Stomach (tissue), 19 donors: ENCODE measurements at regions of chr19 and their contacts with region 1.

Region 1: DNA sequence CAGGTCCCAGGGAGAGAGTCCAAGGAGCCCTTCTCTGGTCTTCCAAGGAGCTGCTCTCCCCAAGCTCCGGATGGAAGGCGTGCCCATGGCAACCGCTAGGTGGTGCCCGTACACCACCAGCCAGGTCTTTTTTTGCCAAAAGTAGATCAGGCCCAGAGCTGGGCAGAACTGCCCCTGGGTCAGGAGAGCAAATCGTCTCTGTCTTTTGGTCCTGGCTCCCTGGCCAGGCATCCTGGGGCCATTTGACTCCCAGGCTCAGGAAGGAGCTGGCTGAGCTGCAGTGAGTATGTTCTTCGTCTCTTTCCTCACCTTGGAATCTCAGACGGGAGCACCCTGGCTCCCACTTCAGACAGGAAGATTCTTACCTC is 24.6 kb upstream of the BCL3 start:
- DNase-seq: peak; percentile 86 to 93
- H3K4me3 ChIP-seq: no peak overlapping the region
- H3K27ac ChIP-seq: peak overlapping the region; percentile 60 to 84 (median 73)
- H3K4me1 ChIP-seq: peaks cover 31 to 59% (median 37%) of the 10 kb centered on the region in 4 donors
- H3K27me3 ChIP-seq: no peaks in the 10 kb centered on the region
- CTCF ChIP-seq: peak in 5 of 7 experiments; percentile 89 to 98 (median 97)
- EP300 ChIP-seq: no peak
- POLR2A ChIP-seq: no peak

Region 2: GRCh38 chr19:44770550-44771257 is 46.8 kb after region 1 on chr19:
- intact Hi-C with region 1: loop called (anchors 5 kb)
- DNase-seq: peak; percentile 97 to 98
- H3K4me3 ChIP-seq: peak overlapping the region in 1 of 4 donors; percentile 8
- H3K27ac ChIP-seq: peak overlapping the region in 4 of 5 donors; percentile 13 to 55 (median 43)
- H3K4me1 ChIP-seq: peaks cover 3 to 16% (median 12%) of the 10 kb centered on the region in 4 donors
- H3K27me3 ChIP-seq: no peaks in the 10 kb centered on the region
- CTCF ChIP-seq: peak in 6 of 7 experiments; percentile 14 to 96 (median 88)
- EP300 ChIP-seq: no peak
- POLR2A ChIP-seq: no peak